Left colon (tissue), 2 donors: ENCODE measurements at regions of chr6 and their contacts with region 1.

Region 1: GRCh38 chr6:31680840-31681671 is at the start of gene LY6G5C:
- DNase-seq: peak; percentile 85 to 86
- ATAC-seq: peak; percentile 78
- total RNA-seq, gene LY6G5C: 1.6 to 2.5 TPM

Region 2: GRCh38 chr6:31575335-31575901 is 105.6 kb before region 1 on chr6 and contains the start of gene TNF:
- intact Hi-C with region 1: no loop called
- DNase-seq: peak in 1 of 2 donors; percentile 57
- ATAC-seq: peak; percentile 73
- total RNA-seq, gene TNF: 0.27 to 1.4 TPM

Region 3: GRCh38 chr6:31769684-31770371 is 88.8 kb after region 1 on chr6:
- intact Hi-C with region 1: loop called in 1 of 2 experiments (anchors 5 kb)
- DNase-seq: peak; percentile 87 to 91
- ATAC-seq: peak; percentile 75

Region 4: GRCh38 chr6:31806465-31807272 is 125.6 kb after region 1 on chr6 and contains the start of gene LSM2:
- intact Hi-C with region 1: no loop called
- DNase-seq: peak; percentile 98
- ATAC-seq: peak; percentile 99
- total RNA-seq, gene LSM2: 33.0 to 33.5 TPM